IMR-90 (cell line): ENCODE measurements at regions of chr16 and their contacts with region 1.

Region 1: GRCh38 chr16:9151597-9151996 is 60.2 kb downstream of the HAPSTR1 start:
- DNase-seq: peak; percentile 84
- ATAC-seq: peak; percentile 81
- H3K4me3 ChIP-seq: no peak overlapping the region
- H3K27ac ChIP-seq: peak overlapping the region; percentile 81
- H3K4me1 ChIP-seq: peaks cover 6% of the 10 kb centered on the region; the same call in 1 of the 2 replicates
- H3K27me3 ChIP-seq: no peaks in the 10 kb centered on the region; the same call in 1 of the 2 replicates
- CTCF ChIP-seq: no peak
- POLR2A ChIP-seq: no peak
- RAD21 ChIP-seq: no peak

Region 2: GRCh38 chr16:8958344-8959167 is 193.0 kb before region 1 on chr16:
- CTCF ChIA-PET with region 1: interaction called, 14 read pairs
- POLR2A ChIA-PET with region 1: no interaction called
- dilution Hi-C with region 1: no loop called
- in situ Hi-C with region 1: no loop called
- intact Hi-C with region 1: no loop called
- DNase-seq: peak; percentile 69
- ATAC-seq: peak; percentile 30
- H3K4me3 ChIP-seq: no peak overlapping the region
- H3K27ac ChIP-seq: peak overlapping the region; percentile 7; the same call in 1 of the 2 replicates
- H3K4me1 ChIP-seq: peaks cover 37% of the 10 kb centered on the region
- H3K27me3 ChIP-seq: no peaks in the 10 kb centered on the region
- CTCF ChIP-seq: no peak
- POLR2A ChIP-seq: no peak
- RAD21 ChIP-seq: no peak